Activated CD4-positive, alpha-beta T cell treated with anti-CD3 and anti-CD28 coated beads, Interleukin-2, amount 10 ng/mL, durations not matched to agents 24 days and 14 days (primary cell): ENCODE measurements at regions of chr1 and their contacts with region 1.

Region 1: DNA sequence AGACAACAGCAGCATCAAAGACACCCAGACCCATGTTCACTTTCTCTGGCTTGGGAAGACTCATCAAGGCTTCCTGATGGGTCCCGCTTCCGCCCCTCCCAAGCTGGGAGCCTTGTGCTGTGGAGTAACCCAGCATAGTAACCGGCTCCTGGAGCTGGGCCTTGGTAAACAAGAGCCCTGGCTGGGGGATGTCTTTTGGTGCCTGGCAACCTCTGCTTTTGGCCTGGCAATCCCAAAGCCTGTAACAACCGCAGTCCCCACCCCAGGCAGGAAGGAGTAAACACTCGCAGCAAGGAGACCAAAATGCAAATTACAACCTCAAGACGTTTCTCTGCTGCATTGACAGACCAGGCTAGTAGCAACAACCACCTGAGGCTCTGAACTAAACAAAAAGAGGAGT is 16.9 kb upstream of the THRAP3 start:
- DNase-seq: no peak
- H3K4me3 Mint-ChIP-seq: no peak overlapping the region
- H3K27ac Mint-ChIP-seq: peak overlapping the region; percentile 69
- H3K4me1 Mint-ChIP-seq: peaks cover 11% of the 10 kb centered on the region
- H3K27me3 Mint-ChIP-seq: no peaks in the 10 kb centered on the region

Region 2: GRCh38 chr1:36285448-36286101 is 78.2 kb after region 1 on chr1:
- intact Hi-C with region 1: loop called (anchors 5 kb)
- DNase-seq: peak; percentile 90
- H3K4me3 Mint-ChIP-seq: no peak overlapping the region
- H3K27ac Mint-ChIP-seq: peak overlapping the region; percentile 34
- H3K4me1 Mint-ChIP-seq: peaks cover 18% of the 10 kb centered on the region
- H3K27me3 Mint-ChIP-seq: no peaks in the 10 kb centered on the region

Region 3: DNA sequence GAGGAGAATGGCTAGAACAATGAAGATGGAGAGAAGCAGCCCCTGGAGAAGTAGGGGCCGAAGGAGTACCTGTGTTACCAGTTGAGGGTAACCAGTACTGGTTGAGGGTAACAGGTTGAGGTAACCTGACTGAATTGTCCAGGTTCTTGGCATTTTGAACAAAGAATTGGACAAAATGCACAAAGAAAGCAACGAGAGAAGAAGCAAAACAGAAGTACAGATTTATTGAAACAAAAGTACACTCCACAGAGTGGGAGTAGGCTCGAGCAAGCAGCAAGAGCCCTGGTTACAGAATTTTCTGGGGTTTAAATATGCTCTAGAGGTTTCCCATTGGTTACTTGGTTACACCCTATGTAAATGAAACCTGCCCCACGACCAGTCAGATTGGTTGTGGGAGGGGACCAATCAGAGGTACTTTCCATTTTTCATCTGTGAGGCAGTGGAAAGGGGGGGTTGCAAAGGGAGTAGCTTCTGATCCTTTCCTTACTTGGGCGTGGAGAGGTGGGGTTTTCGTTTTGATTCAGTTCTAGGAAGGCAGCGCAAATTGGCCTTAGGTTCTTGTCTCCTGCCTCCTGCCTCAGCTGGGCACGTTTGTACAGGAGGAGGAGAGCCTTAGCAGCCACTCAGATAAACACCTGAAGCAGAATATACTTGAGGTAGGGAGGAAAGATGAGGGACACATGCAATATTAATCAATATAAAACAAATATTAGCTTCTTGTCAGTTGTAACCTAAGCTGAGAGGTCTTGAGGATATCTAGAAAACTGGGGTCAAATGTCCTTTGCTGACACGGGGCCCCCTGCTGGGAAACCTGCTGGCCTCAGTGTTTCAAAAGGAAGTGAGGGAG is 204.6 kb after region 1 on chr1:
- intact Hi-C with region 1: no loop called
- DNase-seq: peak; percentile 87
- H3K4me3 Mint-ChIP-seq: peak overlapping the region; percentile 49
- H3K27ac Mint-ChIP-seq: peak overlapping the region; percentile 93
- H3K4me1 Mint-ChIP-seq: peaks cover 13% of the 10 kb centered on the region
- H3K27me3 Mint-ChIP-seq: no peaks in the 10 kb centered on the region